GM10248 (cell line): ENCODE measurements at regions of chr7 and their contacts with region 1.

Region 1: DNA sequence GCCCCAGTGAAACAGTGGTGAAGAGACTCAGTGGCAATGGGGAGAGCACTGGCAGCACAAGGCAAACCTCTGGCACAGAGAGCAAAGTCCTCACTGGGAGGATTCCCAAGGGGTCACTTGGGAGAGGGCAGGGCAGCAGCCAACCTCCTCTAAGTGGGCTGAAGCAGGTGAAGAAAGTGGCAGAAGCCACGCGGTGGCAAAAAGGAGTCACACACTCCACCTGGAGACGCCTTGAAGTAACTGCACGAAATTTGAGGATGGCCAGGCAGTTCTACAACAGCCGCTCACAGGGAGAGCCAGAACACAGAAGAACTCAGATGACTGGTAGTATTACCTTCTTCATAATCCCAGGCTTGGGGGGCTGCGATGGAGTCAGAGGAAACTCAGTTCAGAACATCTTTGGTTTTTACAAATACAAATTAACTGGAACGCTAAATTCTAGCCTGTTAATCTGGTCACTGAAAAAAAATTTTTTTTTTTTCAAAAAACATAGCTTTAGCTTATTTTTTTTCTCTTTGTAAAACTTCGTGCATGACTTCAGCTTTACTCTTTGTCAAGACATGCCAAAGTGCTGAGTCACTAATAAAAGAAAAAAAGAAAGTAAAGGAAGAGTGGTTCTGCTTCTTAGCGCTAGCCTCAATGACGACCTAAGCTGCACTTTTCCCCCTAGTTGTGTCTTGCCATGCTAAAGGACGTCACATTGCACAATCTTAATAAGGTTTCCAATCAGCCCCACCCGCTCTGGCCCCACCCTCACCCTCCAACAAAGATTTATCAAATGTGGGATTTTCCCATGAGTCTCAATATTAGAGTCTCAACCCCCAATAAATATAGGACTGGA is 435 bp upstream of the IL6 start:
- DNase-seq: peak; percentile 76
- CTCF ChIP-seq: peak; percentile 79

Region 2: GRCh38 chr7:22577396-22578001 is 149.1 kb before region 1 on chr7:
- CTCF ChIA-PET with region 1: interaction called, 11 read pairs
- POLR2A ChIA-PET with region 1: no interaction called
- DNase-seq: no peak
- CTCF ChIP-seq: no peak

Region 3: GRCh38 chr7:22697876-22698606 is 28.5 kb before region 1 on chr7:
- CTCF ChIA-PET with region 1: interaction called, 58 read pairs
- POLR2A ChIA-PET with region 1: no interaction called
- DNase-seq: peak; percentile 52
- CTCF ChIP-seq: no peak

Region 4: GRCh38 chr7:22776964-22777363 is 50.4 kb after region 1 on chr7:
- CTCF ChIA-PET with region 1: interaction called, 19 read pairs
- POLR2A ChIA-PET with region 1: no interaction called
- DNase-seq: no peak
- CTCF ChIP-seq: no peak